ENCODE measurements at regions of chr1 and their contacts with region 1.

Region 1: DNA sequence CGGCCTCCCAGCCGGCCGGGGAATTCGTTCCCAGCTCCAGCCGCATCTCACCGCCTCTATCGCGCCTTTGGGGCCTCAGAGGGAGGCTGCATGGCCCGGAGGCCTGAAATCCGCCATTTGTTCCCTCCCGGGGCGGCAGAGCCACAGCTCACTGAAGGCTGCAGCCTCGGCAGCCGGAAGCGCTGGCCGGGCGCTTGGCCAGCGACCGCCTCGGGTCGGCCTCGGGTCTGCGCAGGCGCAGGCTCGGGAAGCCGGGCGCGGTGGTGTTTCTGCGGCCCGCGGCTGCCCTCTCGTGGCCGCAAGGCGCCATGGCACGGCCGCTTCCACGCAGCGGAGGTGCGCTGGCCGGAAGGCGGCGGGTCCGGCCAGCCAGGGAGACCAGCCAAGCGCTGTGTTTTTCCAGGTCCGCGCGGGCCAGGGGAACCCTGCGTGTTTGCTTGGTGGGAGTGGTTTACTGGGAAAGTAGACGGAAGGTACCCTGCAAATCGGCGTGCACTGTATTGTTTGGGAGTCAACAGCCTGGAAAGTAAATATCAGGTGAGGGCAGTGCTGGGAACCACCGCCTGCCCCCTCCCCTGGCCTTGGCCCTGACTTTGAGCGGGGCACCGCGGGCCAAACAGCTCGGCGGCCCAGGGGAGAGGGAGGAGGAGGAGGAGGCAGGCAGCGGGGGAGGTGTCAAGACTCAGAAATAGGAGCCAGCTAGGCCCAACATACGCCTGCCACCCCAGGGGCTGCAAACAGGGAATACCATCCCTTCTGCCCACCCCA is 52.7 kb upstream of the CD34 start:
- DNase-seq: peak; percentile 80 to 91
- ATAC-seq: peak; percentile 87

Region 2: DNA sequence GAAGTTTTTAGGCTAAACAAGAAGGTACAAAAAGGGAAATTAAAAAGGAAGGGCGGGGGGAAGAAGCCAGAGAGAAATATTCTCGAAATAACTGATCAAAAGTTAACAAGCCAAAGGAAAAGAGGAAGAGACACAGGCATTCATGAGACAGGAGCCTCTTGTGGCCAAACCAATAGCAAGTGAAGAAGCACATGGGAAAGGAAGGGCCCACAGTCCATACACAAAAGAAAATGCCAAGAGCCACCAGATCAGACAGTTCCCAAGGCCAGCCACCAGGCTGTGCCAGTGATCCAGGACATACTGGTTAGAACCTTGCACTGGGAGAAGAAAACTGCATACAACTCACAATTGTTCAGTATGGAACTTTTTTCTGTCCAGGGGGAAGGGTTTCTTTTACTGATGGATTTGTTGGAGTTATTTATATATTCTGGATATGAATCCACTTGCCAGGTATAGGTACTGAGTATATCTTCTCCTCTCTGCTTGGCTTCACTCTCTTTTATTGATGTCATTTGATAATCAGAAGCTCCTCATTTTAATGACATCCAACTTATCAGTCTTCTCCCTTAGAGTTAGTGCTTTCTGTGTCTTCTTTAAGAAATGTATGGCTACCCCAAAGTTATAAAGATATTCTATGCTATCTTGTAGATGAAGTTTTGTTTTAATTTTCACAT is 135.0 kb before region 1 on chr1:
- intact Hi-C with region 1: loop called in 1 of 2 experiments (anchors 2 kb)
- DNase-seq: peak; percentile 79 to 80
- ATAC-seq: peak; percentile 61

Region 3: DNA sequence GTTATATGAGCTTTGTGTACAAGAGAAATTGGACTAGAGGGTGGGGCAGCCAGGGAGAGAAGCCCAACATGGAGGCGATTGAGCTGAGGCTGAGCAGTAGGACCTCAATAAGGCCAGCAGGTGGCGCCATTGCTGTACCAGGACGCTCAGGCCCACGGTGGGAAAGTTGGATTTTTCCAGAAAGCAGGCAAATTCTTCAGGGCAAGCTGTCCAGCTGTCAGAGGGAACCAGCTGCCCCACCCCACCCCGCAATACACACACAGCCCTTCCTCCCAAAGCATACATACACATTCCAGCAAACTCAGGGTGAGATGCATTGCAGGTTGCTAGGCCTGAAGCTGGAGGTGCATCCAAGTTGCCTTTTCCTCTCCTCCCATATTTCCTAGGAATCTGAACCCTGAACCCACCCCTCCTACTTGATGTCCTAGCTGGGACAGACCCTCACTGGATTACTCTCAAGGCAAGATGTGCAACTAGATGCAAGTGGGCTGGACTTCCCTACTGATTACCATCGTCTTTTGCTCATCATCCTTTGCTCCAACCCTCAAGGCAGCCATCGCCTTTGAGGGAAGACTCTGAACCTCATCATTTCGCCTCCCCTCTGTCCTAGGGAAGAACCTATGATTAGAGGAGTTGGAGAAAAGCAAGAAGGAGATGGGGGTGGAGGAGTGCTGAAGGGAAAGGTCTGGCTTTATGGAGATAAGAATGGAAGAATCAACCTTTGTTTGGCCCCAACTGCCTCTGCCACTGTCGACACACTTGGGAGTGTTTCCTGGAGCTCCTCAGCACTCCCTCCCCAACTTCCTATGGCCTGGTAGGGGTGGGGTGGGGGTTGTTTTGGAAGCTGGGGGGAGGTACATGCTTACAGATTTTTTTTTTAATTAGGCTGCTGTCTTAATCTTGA is 78.2 kb before region 1 on chr1:
- intact Hi-C with region 1: loop called (anchors 2 to 10 kb)
- DNase-seq: peak; percentile 73 to 90
- ATAC-seq: peak; percentile 97